Panc1 (cell line): ENCODE measurements at regions of chr5 and their contacts with region 1.

Region 1: DNA sequence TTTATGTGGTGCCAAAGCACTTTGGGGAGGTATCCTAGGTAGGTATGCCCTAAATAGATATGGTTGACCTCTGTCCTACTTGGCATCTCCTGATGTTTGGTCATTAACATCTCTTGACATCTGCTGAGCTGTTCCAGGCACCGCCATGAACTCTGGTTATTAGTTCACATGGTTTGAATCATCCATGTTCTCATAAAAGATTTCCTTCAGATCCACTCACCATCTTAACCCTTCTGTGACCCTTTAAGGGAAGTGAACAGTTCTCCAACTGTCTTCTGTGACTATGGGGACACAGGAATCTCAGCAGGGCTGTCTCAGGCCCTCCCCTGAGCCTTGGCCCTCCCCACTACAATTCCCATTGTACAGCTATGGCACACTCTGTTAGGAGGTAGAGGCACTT is 167.7 kb downstream of the CDH6 start:
- DNase-seq: no peak
- ATAC-seq: no peak
- H3K4me3 ChIP-seq: no peak overlapping the region
- H3K27ac ChIP-seq: no peak overlapping the region
- H3K4me1 ChIP-seq: no peaks in the 10 kb centered on the region
- H3K27me3 ChIP-seq: no peaks in the 10 kb centered on the region
- CTCF ChIP-seq: no peak

Region 2: DNA sequence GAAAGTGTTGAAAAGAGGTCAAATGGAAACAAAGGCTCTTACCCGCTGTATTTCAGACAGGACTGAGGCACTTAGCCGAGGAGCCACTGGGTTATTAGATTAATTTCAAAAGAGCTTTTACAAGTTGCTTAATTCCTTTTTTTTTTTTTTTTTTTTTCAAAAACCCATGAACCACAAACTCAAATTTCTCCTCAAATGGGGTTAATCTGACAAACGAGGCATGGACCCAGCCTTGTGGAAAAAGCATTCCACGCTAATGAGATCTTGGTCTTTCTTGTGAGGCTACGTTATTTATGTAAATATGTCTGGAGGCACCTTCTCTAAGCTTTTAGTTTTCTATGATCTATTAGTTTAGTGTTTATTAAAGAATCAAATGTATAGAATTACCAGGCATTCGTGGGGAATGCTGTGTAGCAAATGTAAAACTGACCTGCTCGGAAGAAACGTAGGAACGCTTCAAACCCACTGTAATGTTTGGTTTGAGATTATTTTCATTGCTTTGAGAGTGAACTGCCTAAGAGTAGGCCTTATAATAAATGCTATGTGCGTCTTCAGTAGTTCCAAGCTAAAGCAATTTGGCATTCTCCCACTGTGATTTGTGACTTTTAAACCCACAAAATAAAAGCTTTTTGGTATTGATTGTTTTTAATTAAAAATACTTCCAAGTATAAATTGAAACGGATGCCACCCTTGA is 33.0 kb before region 1 on chr5:
- CTCF ChIA-PET with region 1: interaction called, 11 read pairs
- POLR2A ChIA-PET with region 1: no interaction called
- in situ Hi-C with region 1: no loop called
- intact Hi-C with region 1: no loop called
- DNase-seq: no peak
- ATAC-seq: no peak
- H3K4me3 ChIP-seq: no peak overlapping the region
- H3K27ac ChIP-seq: no peak overlapping the region
- H3K4me1 ChIP-seq: no peaks in the 10 kb centered on the region
- H3K27me3 ChIP-seq: no peaks in the 10 kb centered on the region
- CTCF ChIP-seq: no peak

Region 3: GRCh38 chr5:32916648-32917047 is 1555.4 kb after region 1 on chr5:
- CTCF ChIA-PET with region 1: no interaction called
- POLR2A ChIA-PET with region 1: no interaction called
- in situ Hi-C with region 1: no loop called
- intact Hi-C with region 1: no loop called
- DNase-seq: peak; percentile 15
- ATAC-seq: no peak
- H3K4me3 ChIP-seq: no peak overlapping the region
- H3K27ac ChIP-seq: no peak overlapping the region
- H3K4me1 ChIP-seq: no peaks in the 10 kb centered on the region
- H3K27me3 ChIP-seq: no peaks in the 10 kb centered on the region
- CTCF ChIP-seq: peak; percentile 42